ENCODE measurements at regions of chr4 and their contacts with region 1.

Region 1: GRCh38 chr4:6986781-6987587 is 56.2 kb upstream of the TADA2B start:
- DNase-seq: peak; percentile 99

Region 2: DNA sequence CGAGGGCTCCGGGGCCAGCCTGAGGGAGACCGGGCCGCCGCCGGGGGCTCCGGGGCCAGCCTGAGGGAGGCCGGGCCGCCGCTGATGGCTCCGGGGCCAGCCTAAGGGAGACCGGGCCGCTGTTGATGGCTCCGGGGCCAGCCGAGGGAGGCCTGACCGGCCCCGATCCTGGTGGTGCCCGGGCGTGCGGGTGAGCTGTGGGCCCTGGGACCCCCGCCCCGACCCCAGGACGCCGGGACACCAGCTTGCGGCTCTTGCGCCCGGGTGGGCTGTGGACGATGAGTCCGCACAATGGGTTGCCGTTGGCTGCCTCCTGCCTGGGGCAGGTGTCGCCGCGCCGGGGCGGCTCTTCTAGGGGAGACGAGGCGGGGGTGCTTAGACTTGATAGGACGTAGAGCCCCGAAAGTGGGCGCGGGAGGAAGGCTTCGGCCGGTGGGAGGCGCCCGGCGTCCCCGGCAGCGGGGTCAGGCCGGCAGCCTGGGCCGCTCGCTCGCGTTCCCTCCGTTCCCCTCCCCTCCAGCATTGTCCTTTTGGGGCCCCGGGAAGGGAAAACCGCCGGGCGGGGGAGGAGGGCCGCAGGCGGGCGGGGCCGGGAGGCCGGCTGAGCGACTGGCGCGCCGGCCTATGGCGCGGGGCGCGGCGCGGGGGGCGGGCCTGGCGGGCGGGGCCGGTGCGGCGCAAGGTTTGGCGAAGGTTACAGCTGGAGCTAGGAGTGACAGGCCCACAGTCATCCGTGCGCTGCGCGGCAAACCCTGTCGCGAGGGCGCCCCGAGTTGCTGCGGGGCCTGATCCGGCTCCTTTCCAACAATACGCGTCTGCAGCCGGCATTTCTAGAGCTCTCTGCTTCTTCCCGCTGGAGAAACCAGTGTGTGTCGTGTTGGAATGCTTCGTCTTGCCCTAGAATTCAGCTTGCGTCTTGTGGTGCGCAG is 203.7 kb before region 1 on chr4:
- intact Hi-C with region 1: loop called (anchors 2 kb)
- DNase-seq: peak; percentile 98

Region 3: DNA sequence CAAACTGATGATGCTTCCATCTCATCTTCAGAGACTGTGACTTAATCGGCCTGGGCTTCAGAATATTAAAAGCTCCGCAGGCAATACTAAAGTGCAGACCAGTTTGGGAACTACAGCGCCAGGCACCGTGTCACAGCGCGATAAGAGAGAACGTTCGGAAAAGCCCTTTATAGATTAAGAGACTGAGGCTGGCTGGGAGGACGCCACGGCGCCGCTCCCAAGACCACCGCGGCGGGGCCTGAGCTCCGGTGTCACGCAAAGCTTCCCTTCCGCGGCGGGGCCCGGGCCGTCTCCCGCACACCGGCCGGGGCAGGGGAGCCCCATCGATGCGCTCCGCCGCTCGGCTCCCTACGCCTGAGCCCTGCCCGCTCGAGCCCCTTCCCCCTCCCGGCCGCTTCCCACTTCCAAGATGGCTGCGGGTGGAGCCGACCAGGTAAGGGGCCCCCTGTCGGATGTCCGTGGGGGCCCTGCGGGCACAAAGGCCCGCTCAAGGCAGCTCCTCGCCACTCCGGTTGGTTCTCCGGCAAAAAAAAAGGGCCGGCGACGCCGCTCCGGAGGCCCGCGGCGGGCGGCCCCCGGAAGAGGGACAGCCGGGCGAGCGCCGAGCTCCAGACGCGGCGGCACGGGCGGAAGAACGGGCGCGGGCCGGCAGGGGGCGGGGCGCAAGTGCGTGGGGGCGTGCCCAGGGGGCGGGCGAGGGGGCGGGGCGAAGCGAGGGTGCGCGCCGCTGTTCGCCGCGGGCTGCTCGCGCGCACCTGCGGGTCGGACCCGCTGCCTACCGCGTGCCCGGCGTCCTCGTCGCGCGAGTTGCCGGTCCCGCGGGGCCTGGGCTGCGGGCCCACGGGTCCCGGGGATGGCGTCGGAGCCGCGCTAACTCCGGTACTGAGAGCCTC is 77.7 kb before region 1 on chr4 and contains the start of gene TBC1D14:
- intact Hi-C with region 1: loop called (anchors 1 kb)
- DNase-seq: peak; percentile 95
- total RNA-seq, gene TBC1D14: 30.8 TPM

Region 4: GRCh38 chr4:7042697-7043464 is 55.9 kb after region 1 on chr4 and contains the start of gene TADA2B:
- intact Hi-C with region 1: loop called (anchors 2 kb)
- DNase-seq: peak; percentile 98
- total RNA-seq, gene TADA2B: 25.6 TPM

Region 5: GRCh38 chr4:7124689-7125442 is 137.9 kb after region 1 on chr4:
- intact Hi-C with region 1: no loop called
- DNase-seq: no peak

Region 6: GRCh38 chr4:7254736-7255487 is 267.9 kb after region 1 on chr4:
- intact Hi-C with region 1: no loop called
- DNase-seq: no peak